B cell (primary cell): ENCODE measurements at regions of chr4 and their contacts with region 1.

Region 1: DNA sequence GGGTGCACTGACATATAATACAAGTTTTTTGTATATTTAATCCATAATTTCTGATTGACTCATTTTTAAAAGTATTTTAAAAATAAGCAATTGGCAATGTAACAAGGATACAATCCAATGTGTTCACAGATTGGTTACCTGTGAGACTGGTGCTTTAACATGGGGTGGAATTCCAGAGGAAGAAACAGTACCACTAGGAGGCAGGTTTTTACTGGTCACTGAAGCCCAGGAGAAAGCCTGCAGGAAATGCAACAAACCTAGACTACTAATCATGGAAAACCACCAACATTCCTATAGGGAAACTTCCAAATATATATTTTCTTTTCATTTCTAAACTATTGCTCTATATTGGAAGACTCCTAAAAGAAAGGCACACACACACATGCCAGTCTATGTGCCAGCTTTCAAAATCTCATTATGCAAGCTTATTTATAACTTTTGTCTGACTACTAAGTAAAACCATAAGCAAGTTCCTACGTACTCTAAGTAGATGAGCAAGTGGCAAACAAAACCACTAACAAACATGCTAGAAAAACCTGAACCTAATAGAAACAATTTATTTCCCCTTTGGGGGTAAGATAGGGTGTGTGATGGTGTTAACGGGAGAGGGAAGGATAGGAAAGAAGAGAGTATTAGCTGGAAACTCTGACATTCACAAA is 19.2 kb downstream of the G3BP2 start:
- DNase-seq: peak; percentile 24
- ATAC-seq: no peak
- H3K4me3 ChIP-seq: no peak overlapping the region
- H3K4me3 Mint-ChIP-seq: no peak overlapping the region
- H3K27ac ChIP-seq: no peak overlapping the region
- H3K27ac Mint-ChIP-seq: peak overlapping the region; percentile 74
- H3K4me1 ChIP-seq: no peaks in the 10 kb centered on the region
- H3K4me1 Mint-ChIP-seq: peaks cover 30% of the 10 kb centered on the region
- H3K27me3 ChIP-seq: no peaks in the 10 kb centered on the region
- H3K27me3 Mint-ChIP-seq: no peaks in the 10 kb centered on the region
- CTCF ChIP-seq: peak; percentile 49

Region 2: GRCh38 chr4:74590152-74590875 is 1063.7 kb before region 1 on chr4:
- CTCF ChIA-PET with region 1: no interaction called
- POLR2A ChIA-PET with region 1: no interaction called
- intact Hi-C with region 1: no loop called
- DNase-seq: no peak
- ATAC-seq: no peak
- H3K4me3 ChIP-seq: no peak overlapping the region
- H3K4me3 Mint-ChIP-seq: no peak overlapping the region
- H3K27ac ChIP-seq: no peak overlapping the region
- H3K27ac Mint-ChIP-seq: no peak overlapping the region
- H3K4me1 ChIP-seq: no peaks in the 10 kb centered on the region
- H3K4me1 Mint-ChIP-seq: no peaks in the 10 kb centered on the region
- H3K27me3 ChIP-seq: no peaks in the 10 kb centered on the region
- H3K27me3 Mint-ChIP-seq: no peaks in the 10 kb centered on the region
- CTCF ChIP-seq: no peak

Region 3: GRCh38 chr4:75708218-75708691 is 54.3 kb after region 1 on chr4:
- CTCF ChIA-PET with region 1: interaction called, 27 read pairs
- POLR2A ChIA-PET with region 1: no interaction called
- intact Hi-C with region 1: loop called (anchors 2 kb)
- DNase-seq: peak; percentile 65
- ATAC-seq: peak; percentile 82
- H3K4me3 ChIP-seq: no peak overlapping the region
- H3K4me3 Mint-ChIP-seq: peak overlapping the region; percentile 19
- H3K27ac ChIP-seq: no peak overlapping the region
- H3K27ac Mint-ChIP-seq: peak overlapping the region; percentile 43
- H3K4me1 ChIP-seq: peaks cover 7 to 10% of the 10 kb centered on the region in 2 donors
- H3K4me1 Mint-ChIP-seq: peaks cover 14% of the 10 kb centered on the region
- H3K27me3 ChIP-seq: no peaks in the 10 kb centered on the region
- H3K27me3 Mint-ChIP-seq: no peaks in the 10 kb centered on the region
- CTCF ChIP-seq: peak; percentile 72